Astrocyte of the cerebellum (primary cell): ENCODE measurements at regions of chr9 and their contacts with region 1.

Region 1: GRCh38 chr9:33076358-33077004 is at the start of gene SMU1:
- DNase-seq: peak; percentile 93
- H3K4me3 ChIP-seq: peak within 1 kb of the TSS; percentile 82
- CTCF ChIP-seq: no peak

Region 2: GRCh38 chr9:33116860-33117259 is 40.4 kb after region 1 on chr9:
- in situ Hi-C with region 1: loop called (anchors 5 kb)
- DNase-seq: no peak
- H3K4me3 ChIP-seq: no peak overlapping the region
- CTCF ChIP-seq: no peak

Region 3: DNA sequence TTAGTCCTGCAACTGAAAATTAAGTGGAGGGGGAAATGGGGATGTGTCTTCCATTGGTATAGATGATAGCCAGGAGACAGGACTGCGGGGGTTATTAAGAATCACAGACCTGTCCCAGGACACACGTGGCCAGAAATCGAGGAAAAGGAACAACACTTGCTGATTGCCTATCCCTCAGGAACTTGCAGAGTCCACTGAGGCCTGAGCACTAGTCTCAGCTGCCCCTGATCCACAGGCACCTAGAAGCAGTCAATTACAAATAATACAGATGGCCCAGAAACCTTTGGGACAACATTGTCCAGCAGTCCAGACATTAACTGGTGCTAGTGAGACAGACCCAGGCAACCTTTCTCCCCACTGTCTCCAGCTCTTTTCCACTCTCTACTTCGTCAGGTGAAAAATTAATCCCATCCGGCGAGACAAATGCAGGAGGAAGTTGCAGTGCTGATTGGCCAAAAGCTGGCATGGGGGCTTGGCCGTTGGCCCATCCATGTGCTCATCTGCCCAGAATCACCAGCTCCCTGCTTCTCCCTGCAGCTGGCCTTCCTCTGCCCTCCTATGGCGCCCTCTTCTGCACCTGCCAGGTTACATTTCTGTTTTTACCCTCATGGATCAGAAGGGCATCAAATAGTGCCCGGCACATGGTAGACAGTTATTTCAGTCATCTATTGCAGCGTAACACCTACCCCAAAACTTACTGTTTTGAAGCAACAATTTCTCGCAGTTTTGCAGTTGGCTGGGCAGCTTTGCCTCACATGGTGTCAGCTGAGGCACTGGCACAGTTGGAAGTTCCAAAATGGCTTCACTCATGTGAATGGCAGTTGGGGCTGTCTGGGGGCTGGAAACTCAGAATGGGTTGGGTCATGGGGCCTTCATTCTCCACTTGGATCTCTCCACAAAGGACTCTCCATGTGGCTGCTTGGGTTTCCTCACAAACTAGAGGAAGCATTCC is 94.3 kb after region 1 on chr9:
- in situ Hi-C with region 1: loop called (anchors 5 kb)
- DNase-seq: no peak
- H3K4me3 ChIP-seq: no peak overlapping the region
- CTCF ChIP-seq: peak; percentile 25

Region 4: DNA sequence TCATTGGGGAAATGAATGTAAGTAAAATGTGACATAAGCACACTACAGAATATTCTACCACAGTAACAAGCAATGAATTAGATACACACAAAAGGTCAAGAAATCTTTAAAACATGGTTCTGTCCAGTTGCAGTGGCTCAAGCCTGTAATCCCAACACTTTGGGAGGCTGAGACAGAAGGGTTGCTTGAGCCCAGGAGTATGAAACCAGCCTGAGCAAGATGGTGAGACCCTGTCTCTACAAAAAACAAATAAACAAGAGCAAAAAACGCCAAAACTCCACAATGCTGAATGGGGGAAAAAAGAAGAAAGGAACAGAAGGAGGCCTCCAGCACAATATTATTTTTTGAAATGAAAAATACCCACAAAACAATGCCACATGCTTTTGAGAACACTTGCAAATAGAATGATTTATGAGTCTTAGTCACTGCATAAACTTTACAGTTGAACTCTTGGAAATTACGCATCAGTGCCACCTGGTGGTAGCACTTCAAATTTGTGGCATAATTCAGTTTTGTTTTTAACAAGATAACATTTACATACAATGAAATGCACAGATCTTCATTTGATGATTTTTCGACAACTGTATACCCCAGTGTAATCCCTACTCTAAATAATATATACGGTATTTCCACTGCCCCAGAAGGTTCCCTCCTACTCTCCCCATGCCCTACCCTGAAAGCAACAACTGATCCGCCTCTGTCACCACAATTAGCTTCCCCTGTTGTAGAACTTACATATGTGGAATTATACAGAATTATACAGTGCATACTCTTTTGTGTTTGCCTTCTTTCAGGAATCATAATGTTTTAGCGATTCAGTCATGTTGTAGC is 149.1 kb after region 1 on chr9:
- in situ Hi-C with region 1: loop called (anchors 5 kb)
- DNase-seq: peak; percentile 71
- H3K4me3 ChIP-seq: no peak overlapping the region
- CTCF ChIP-seq: peak; percentile 49